ENCODE measurements at regions of chr18 and their contacts with region 1.

Region 1: DNA sequence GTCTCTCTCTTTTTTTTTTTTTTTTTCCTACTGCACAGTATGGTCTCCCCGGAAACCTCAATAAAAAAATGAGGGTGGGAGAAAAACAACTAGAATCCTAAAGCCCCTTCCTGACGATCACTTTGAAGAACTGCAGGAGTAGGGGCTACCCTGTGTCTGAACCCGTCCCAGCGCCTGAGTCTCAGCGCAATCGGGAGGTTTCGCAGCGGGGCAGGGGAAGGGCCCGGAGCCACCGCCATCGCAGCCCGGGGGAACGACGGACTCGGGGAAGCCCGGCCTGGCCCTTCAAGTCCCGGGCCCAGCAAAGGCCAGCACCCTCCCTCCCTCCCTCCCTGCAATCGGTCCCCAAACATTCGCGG is 411 bp downstream of the NARS1 start:
- DNase-seq: peak; percentile 28
- H3K4me3 Mint-ChIP-seq: peak overlapping the region; percentile 98
- H3K27ac Mint-ChIP-seq: peak overlapping the region; percentile 95
- H3K4me1 Mint-ChIP-seq: peaks cover 32% of the 10 kb centered on the region
- H3K27me3 Mint-ChIP-seq: no peaks in the 10 kb centered on the region

Region 2: GRCh38 chr18:56638271-56639093 is 982.7 kb before region 1 on chr18 and contains the start of gene TXNL1:
- CTCF ChIA-PET with region 1: no interaction called
- intact Hi-C with region 1: loop called (anchors 1 kb)
- DNase-seq: peak; percentile 99
- H3K4me3 Mint-ChIP-seq: peak within 1 kb of the TSS; percentile 90
- H3K27ac Mint-ChIP-seq: peak within 1 kb of the TSS; percentile 95
- H3K4me1 Mint-ChIP-seq: peaks cover 38% of the 10 kb centered on the region
- H3K27me3 Mint-ChIP-seq: no peaks in the 10 kb centered on the region
- total RNA-seq, gene TXNL1: 64.1 to 68.6 TPM

Region 3: DNA sequence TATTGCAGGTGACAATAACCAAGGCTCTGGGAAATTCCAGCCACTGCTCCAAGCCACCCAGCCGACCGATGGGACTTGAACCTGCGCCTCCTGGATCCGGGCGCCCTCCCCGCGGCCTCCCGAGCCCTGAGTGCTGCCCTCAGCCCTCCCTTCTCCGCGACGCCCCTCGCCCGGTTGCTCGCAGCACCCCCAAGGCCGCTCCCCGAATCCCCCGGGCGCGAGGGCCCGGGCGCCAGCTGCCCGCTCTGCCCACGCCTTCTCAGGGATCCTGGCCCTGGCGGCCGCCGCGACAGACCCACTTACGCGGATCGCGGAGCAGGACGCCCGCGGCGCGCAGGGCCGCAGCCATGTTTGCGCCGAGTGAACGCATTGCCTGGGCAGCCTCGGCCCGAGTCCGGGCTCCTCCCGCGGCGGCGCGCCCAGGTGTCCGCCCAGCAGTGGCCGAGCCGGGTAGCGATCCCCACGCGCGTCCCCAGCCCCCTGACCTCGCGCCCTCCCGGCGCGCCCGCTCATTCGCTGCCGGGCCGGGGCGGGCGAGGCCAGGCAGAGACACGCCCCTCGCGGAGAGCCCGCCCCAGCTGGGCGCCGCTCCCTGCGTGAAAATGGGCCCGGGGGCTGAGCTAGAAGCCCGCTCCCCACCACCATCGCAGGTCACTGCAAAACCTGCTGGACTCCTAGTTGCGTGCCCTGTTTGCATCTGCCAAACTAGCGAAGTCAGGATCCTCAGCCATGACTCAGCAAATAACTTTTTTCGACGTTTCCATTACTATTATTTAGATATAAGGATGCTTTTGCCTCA is 34.8 kb before region 1 on chr18 and contains the start of gene FECH:
- CTCF ChIA-PET with region 1: interaction called, 3 read pairs
- intact Hi-C with region 1: loop called (anchors 1 kb)
- DNase-seq: peak; percentile 58
- H3K4me3 Mint-ChIP-seq: peak within 1 kb of the TSS; percentile 83
- H3K27ac Mint-ChIP-seq: peak within 1 kb of the TSS; percentile 56
- H3K4me1 Mint-ChIP-seq: peaks cover 20% of the 10 kb centered on the region
- H3K27me3 Mint-ChIP-seq: no peaks in the 10 kb centered on the region
- total RNA-seq, gene FECH: 18.8 to 19.2 TPM

Region 4: DNA sequence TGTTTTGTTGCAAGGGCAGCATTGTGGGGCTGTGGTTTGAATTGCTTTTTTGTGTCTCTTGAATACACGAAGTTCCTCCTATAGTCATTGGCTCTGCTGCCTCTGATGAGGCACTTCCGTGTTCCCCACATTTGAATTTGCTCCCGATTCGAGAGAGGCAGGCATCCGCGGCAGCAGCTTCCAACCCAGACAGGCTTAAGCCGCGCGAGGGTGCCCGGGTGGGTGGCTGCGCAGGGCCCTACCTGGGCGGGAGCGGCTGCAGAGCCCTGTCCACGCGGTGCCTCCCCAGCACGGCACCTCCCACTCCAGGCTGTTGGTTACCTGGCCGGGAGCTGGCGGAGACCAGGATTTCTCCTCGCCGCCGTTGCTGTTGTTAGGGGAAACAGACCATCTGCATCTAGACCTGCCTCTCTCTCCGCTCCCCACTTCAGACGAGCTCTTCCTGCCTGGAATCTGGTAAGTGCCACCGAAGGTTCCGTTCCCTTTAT is 574.1 kb after region 1 on chr18:
- CTCF ChIA-PET with region 1: interaction called, 3 read pairs
- intact Hi-C with region 1: loop called (anchors 10 kb)
- DNase-seq: peak; percentile 36
- H3K4me3 Mint-ChIP-seq: peak overlapping the region; percentile 80
- H3K27ac Mint-ChIP-seq: peak overlapping the region; percentile 12
- H3K4me1 Mint-ChIP-seq: peaks cover 16% of the 10 kb centered on the region
- H3K27me3 Mint-ChIP-seq: no peaks in the 10 kb centered on the region

Region 5: DNA sequence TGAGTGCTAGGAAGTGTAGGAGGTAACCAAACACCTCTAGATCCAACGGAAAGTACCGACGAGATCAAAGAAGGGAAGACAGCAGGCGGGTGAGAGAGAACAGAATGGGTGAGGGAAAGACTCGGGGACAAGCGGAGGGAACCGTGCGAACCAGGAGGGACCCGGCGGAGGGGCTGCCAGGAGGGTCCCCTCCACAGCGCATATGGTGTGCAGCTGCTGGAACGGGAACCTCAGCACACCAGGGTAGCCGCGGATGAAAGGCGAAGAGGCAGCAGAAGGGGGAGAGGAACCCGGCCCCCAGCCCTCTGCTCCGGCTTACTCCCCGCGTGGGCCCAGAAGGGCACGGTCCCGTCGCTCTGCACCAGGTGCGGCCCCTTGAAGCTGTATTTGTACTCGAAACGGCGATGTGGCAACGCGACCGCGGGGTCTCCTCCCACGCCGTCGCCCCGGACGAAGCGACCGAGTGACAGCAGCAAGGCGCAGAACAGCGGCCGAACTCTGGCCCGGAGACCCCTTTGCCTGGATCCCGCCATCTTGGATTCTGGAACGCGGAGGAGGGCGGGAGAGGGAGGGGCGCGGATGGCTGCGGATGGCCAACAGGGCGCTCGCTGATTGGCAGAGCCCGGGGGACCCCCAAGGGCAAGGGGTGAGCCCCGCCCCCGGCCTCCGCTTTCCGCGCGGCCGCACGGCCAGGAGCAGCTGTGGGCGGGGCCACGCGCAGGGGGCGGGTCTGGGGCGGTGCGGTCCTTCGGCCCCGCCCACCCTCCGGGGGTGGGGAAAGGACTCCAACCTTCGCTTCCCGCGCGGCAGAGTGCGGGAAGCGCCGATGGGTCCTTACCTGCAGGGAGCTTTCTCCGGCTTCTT is 1737.7 kb after region 1 on chr18 and contains the start of gene LMAN1:
- CTCF ChIA-PET with region 1: no interaction called
- intact Hi-C with region 1: loop called (anchors 10 kb)
- DNase-seq: peak; percentile 96
- H3K4me3 Mint-ChIP-seq: peak within 1 kb of the TSS; percentile 98
- H3K27ac Mint-ChIP-seq: peak within 1 kb of the TSS; percentile 98
- H3K4me1 Mint-ChIP-seq: peaks cover 36% of the 10 kb centered on the region
- H3K27me3 Mint-ChIP-seq: no peaks in the 10 kb centered on the region
- total RNA-seq, gene LMAN1: 146 to 151 TPM

Measured in activated naive CD4-positive, alpha-beta T cell treated with anti-CD3 and anti-CD28 coated beads for 36 hours (primary cell).